Psoas muscle (tissue), 8 donors: ENCODE measurements at regions of chr3 and their contacts with region 1.

Region 1: DNA sequence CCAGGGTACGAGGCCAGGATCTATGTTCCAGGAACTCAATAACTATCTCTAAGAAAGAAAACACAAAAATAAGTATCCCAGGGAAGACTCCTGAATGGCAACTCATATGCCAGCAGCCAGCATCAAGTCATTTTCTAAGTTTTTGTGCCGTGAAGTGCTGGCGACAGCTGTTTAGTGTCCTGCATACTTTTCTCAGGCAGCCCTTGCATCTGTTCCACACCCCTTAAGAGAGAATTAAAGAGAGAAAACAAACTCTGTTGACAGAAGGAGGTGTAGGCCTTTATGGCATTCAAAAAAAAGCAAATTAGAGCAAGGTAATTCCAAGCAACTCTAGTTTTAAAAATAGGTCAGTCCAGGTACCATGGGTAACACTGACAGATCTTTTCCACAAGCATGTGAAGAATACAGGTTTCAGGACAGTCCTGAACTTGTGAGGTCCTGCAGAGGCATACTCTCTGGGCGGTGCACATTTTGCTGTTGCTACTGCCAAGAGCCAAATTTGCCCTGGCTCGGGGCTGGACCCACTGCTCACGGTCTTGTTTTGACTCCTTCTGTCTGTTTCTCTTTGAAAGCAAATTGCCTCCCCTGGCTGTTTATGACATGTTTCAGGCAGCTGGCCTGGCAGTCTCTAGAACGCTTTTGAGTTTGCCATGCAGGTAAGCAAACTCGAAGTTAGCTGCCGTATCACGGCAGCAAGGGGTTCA is 252.1 kb upstream of the ADAMTS9 start:
- DNase-seq: no peak
- ATAC-seq: peak in 2 of 4 donors; percentile 28 to 43
- H3K4me3 ChIP-seq: no peak overlapping the region
- H3K27ac ChIP-seq: no peak overlapping the region
- H3K4me1 ChIP-seq: peaks cover 17% of the 10 kb centered on the region
- H3K27me3 ChIP-seq: no peaks in the 10 kb centered on the region
- CTCF ChIP-seq: no peak

Region 2: GRCh38 chr3:64903006-64903405 is 36.9 kb before region 1 on chr3:
- intact Hi-C with region 1: loop called in 1 of 2 experiments (anchors 5 kb)
- DNase-seq: no peak
- ATAC-seq: no peak
- H3K4me3 ChIP-seq: no peak overlapping the region
- H3K27ac ChIP-seq: no peak overlapping the region
- H3K4me1 ChIP-seq: peaks cover 27% of the 10 kb centered on the region
- H3K27me3 ChIP-seq: no peaks in the 10 kb centered on the region
- CTCF ChIP-seq: no peak

Region 3: GRCh38 chr3:65636326-65636725 is 696.4 kb after region 1 on chr3:
- intact Hi-C with region 1: no loop called
- DNase-seq: no peak
- ATAC-seq: no peak
- H3K4me3 ChIP-seq: no peak overlapping the region
- H3K27ac ChIP-seq: no peak overlapping the region
- H3K4me1 ChIP-seq: no peaks in the 10 kb centered on the region
- H3K27me3 ChIP-seq: no peaks in the 10 kb centered on the region
- CTCF ChIP-seq: no peak